Breast epithelium (tissue), 4 donors: ENCODE measurements at regions of chr3 and their contacts with region 1.

Region 1: GRCh38 chr3:24237971-24238767 is 256.5 kb downstream of the THRB start:
- DNase-seq: peak in 1 of 2 donors; percentile 43
- H3K4me3 ChIP-seq: no peak overlapping the region
- H3K27ac ChIP-seq: peak overlapping the region; percentile 62 to 72
- H3K4me1 ChIP-seq: peaks cover 0 to 6% of the 10 kb centered on the region in 2 donors
- H3K27me3 ChIP-seq: no peaks in the 10 kb centered on the region
- CTCF ChIP-seq: peak; percentile 63 to 81 (median 75)
- POLR2A ChIP-seq: no peak

Region 2: DNA sequence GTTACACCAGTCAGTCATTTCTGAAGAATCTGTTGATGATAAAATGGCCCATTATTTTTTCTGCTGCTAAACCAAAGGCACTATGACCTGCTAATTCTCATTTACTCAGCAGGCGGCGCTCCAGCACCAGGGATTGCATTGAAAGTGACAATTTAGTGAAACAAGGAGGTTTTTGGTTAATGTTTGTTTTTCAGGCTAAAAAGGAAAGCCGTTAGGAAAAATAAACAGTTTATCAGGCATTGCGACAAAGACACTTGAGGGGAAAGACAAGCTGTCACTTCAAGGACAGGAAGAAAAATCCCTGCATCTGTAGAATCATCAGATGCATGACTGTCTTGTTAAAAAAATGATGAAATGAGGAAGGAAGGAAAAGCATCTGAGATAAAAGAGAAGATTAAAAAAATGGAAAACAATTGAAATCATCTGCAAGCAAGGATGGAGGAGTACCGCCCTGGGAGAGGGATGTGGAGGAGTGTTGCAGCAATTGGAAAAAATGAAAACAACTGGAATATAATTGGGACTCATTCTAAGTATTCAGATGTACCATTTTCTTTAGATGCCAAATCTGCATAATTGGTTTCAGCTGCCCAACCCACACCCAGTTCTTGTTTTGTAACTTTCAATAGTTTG is 239.0 kb before region 1 on chr3:
- intact Hi-C with region 1: loop called (anchors 5 kb)
- DNase-seq: peak; percentile 41 to 63
- H3K4me3 ChIP-seq: no peak overlapping the region
- H3K27ac ChIP-seq: no peak overlapping the region
- H3K4me1 ChIP-seq: no peaks in the 10 kb centered on the region
- H3K27me3 ChIP-seq: no peaks in the 10 kb centered on the region
- CTCF ChIP-seq: peak; percentile 85 to 98 (median 95)
- POLR2A ChIP-seq: no peak